ENCODE measurements at regions of chr17 and their contacts with region 1.

Region 1: GRCh38 chr17:10875979-10876555 is 38.2 kb upstream of the PIRT start:
- DNase-seq: no peak

Region 2: GRCh38 chr17:11144358-11145233 is 268.5 kb after region 1 on chr17:
- intact Hi-C with region 1: loop called (anchors 5 kb)
- DNase-seq: no peak

Region 3: GRCh38 chr17:11644261-11645212 is 768.5 kb after region 1 on chr17:
- intact Hi-C with region 1: loop called (anchors 10 kb)
- DNase-seq: no peak

Region 4: DNA sequence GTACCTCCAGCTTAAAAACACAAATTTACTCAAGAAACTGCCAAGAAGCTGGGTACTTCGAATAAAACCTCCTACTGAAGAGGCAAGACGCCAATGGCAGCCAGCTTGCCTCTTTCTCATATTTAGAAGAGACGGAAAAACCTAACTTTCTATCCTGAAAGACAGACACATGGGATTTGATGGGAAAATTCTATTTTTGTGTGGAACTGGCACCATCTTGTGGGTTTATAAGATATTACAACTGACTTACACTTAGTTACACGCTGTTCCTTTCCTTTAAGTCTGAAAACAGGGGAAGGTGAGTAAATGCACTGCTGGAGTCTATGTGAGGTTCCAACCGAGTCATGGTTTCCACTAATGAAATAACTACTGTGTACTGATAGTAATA is 1110.9 kb after region 1 on chr17:
- intact Hi-C with region 1: loop called (anchors 5 kb)
- DNase-seq: no peak

Measured in cardiac septum (tissue), 1 donor.